ENCODE measurements at regions of chr2 and their contacts with region 1.

Region 1: DNA sequence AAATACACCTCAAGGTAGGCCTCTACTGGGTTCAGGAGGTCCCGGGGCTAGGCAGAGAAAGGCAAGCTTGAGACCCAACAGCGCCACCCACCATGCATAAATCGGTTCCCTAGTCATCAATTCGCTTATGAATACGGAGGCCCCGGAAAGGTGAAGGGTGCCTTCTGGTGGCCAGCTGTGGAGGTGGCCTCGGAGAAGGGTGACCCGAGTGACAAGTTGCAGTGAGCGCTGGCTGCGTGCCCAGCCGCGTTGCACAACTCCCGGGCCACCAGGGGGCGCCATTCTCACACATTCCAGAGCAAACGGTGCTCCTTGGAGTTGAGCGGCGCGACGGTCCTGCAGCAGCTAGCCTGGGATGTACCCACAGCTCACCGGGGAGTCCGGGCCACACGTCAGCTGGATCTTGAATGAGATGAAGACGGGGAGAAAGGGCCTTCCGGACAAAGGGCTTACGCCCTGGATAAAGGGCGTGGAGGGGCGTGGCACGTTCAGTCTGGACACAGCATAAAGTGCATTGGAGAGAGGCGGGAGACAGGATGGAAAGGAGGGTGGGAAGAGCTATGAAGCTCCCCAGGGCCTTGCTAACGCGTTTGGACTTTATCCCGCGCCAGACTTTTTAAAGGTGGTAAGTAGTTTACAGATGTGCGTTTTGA is 20.4 kb downstream of the TMSB10 start:
- DNase-seq: peak; percentile 95 to 100 (median 99)
- ATAC-seq: peak; percentile 80
- H3K4me3 ChIP-seq: peak overlapping the region; percentile 73
- H3K4me3 Mint-ChIP-seq: peak overlapping the region; percentile 91
- H3K27ac ChIP-seq: peak overlapping the region; percentile 20 to 69
- H3K27ac Mint-ChIP-seq: peak overlapping the region; percentile 85
- H3K4me1 ChIP-seq: peaks cover 56% of the 10 kb centered on the region
- H3K4me1 Mint-ChIP-seq: peaks cover 38% of the 10 kb centered on the region
- H3K27me3 ChIP-seq: no peaks in the 10 kb centered on the region
- H3K27me3 Mint-ChIP-seq: no peaks in the 10 kb centered on the region
- CTCF ChIP-seq: peak; percentile 99

Region 2: DNA sequence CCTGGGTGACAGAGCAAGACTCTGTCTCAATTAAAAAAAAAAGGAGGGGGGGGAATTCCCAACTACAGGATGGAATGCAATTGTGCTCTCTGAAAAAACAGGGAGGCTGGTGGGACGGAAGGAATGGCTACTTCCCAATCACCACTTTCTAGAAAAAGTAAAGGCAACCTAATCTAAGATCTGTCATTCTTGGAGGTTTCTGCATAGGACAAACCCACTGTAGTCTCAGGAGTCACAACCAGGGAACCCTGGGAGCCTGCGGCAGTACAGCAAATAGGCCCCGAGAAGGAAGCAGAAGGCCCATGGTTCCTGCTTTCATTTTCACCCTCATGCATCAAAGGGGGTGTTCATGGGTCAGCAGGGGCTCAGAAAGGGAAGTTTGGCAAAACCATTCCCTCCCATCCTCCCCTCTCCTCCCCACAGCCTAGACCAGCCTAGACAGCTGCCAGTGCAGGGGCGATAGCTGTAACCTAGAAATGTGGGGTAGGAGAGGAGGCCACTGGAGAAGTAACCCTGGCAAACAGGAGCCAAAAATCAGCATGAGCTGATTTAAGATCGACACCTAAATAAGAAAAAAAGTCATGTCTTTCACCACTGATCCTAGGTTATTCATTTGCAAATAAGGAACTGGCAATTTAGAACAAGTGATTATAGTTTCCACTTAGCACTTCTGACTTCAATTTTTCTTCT is 92.9 kb before region 1 on chr2:
- CTCF ChIA-PET with region 1: interaction called, 10 read pairs
- POLR2A ChIA-PET with region 1: interaction called, 4 read pairs
- intact Hi-C with region 1: no loop called
- DNase-seq: peak in 4 of 14 experiments; percentile 56 to 65 (median 64)
- ATAC-seq: peak; percentile 61
- H3K4me3 ChIP-seq: peak overlapping the region; percentile 44
- H3K4me3 Mint-ChIP-seq: peak overlapping the region; percentile 80
- H3K27ac ChIP-seq: peak overlapping the region; percentile 68 to 71
- H3K27ac Mint-ChIP-seq: no peak overlapping the region
- H3K4me1 ChIP-seq: peaks cover 68% of the 10 kb centered on the region
- H3K4me1 Mint-ChIP-seq: peaks cover 45% of the 10 kb centered on the region
- H3K27me3 ChIP-seq: no peaks in the 10 kb centered on the region
- H3K27me3 Mint-ChIP-seq: no peaks in the 10 kb centered on the region
- CTCF ChIP-seq: no peak

Region 3: GRCh38 chr2:84865181-84865783 is 60.6 kb before region 1 on chr2:
- CTCF ChIA-PET with region 1: interaction called, 12 read pairs
- POLR2A ChIA-PET with region 1: interaction called, 8 read pairs
- intact Hi-C with region 1: no loop called
- DNase-seq: peak in 5 of 14 experiments; percentile 15 to 73 (median 71)
- ATAC-seq: peak; percentile 65
- H3K4me3 ChIP-seq: no peak overlapping the region
- H3K4me3 Mint-ChIP-seq: peak overlapping the region; percentile 42
- H3K27ac ChIP-seq: peak overlapping the region in 1 of 2 donors; percentile 36
- H3K27ac Mint-ChIP-seq: peak overlapping the region; percentile 94
- H3K4me1 ChIP-seq: peaks cover 70% of the 10 kb centered on the region
- H3K4me1 Mint-ChIP-seq: peaks cover 97% of the 10 kb centered on the region
- H3K27me3 ChIP-seq: no peaks in the 10 kb centered on the region
- H3K27me3 Mint-ChIP-seq: no peaks in the 10 kb centered on the region
- CTCF ChIP-seq: peak; percentile 75

Region 4: GRCh38 chr2:84894758-84895520 is 30.9 kb before region 1 on chr2:
- CTCF ChIA-PET with region 1: interaction called, 88 read pairs
- POLR2A ChIA-PET with region 1: interaction called, 46 read pairs
- intact Hi-C with region 1: no loop called
- DNase-seq: peak in 4 of 14 experiments; percentile 57 to 64 (median 60)
- ATAC-seq: peak; percentile 74
- H3K4me3 ChIP-seq: peak overlapping the region; percentile 27
- H3K4me3 Mint-ChIP-seq: peak overlapping the region; percentile 16
- H3K27ac ChIP-seq: peak overlapping the region; percentile 59 to 76
- H3K27ac Mint-ChIP-seq: peak overlapping the region; percentile 66
- H3K4me1 ChIP-seq: peaks cover 45% of the 10 kb centered on the region
- H3K4me1 Mint-ChIP-seq: peaks cover 62% of the 10 kb centered on the region
- H3K27me3 ChIP-seq: no peaks in the 10 kb centered on the region
- H3K27me3 Mint-ChIP-seq: no peaks in the 10 kb centered on the region
- CTCF ChIP-seq: no peak

Region 5: GRCh38 chr2:84946204-84947009 is 20.6 kb after region 1 on chr2:
- CTCF ChIA-PET with region 1: interaction called, 117 read pairs
- POLR2A ChIA-PET with region 1: interaction called, 35 read pairs
- intact Hi-C with region 1: loop called (anchors 2 kb)
- DNase-seq: peak in 12 of 14 experiments; percentile 15 to 80 (median 50)
- ATAC-seq: peak; percentile 83
- H3K4me3 ChIP-seq: peak overlapping the region; percentile 25
- H3K4me3 Mint-ChIP-seq: peak overlapping the region; percentile 30
- H3K27ac ChIP-seq: peak overlapping the region; percentile 43 to 53
- H3K27ac Mint-ChIP-seq: peak overlapping the region; percentile 81
- H3K4me1 ChIP-seq: peaks cover 23% of the 10 kb centered on the region
- H3K4me1 Mint-ChIP-seq: peaks cover 31% of the 10 kb centered on the region
- H3K27me3 ChIP-seq: no peaks in the 10 kb centered on the region
- H3K27me3 Mint-ChIP-seq: no peaks in the 10 kb centered on the region
- CTCF ChIP-seq: no peak

Region 6: DNA sequence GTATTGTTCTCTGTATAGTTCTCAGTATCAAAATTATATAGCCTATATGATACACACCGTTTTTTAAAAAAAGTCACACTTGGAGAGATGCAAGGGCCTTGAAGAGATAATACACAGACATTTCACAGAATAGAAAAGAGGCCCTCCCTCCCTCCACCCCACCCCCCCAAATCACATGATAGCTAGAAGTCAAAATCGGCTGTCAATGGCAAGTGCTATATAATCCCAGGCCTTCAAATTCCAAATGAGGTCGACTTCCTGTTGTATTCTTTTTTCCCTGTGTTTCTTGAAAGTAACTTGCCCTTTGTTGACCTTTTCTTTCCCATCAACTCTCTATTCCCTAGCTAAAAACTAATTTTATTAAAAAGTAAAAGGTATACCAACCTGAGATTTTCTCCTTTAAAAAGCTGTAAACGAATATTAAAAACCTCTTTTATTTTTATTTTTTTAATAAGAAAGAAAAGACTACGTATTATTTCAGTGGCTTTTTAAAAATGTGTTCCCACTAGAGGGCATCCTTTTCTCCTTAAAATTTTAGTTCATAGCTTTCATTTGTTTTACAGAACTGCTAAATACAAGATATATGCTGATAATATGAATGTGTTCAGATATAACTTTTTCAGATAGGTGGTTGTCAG is 91.7 kb after region 1 on chr2:
- CTCF ChIA-PET with region 1: interaction called, 10 read pairs
- POLR2A ChIA-PET with region 1: interaction called, 18 read pairs
- intact Hi-C with region 1: loop called (anchors 1 kb)
- DNase-seq: peak in 3 of 14 experiments; percentile 34 to 40 (median 40)
- ATAC-seq: peak; percentile 39
- H3K4me3 ChIP-seq: no peak overlapping the region
- H3K4me3 Mint-ChIP-seq: peak overlapping the region; percentile 67
- H3K27ac ChIP-seq: peak overlapping the region in 1 of 2 donors; percentile 12
- H3K27ac Mint-ChIP-seq: peak overlapping the region; percentile 73
- H3K4me1 ChIP-seq: peaks cover 4% of the 10 kb centered on the region
- H3K4me1 Mint-ChIP-seq: peaks cover 77% of the 10 kb centered on the region
- H3K27me3 ChIP-seq: no peaks in the 10 kb centered on the region
- H3K27me3 Mint-ChIP-seq: no peaks in the 10 kb centered on the region
- CTCF ChIP-seq: peak; percentile 65